ENCODE measurements at regions of chr5 and their contacts with region 1.

Region 1: GRCh38 chr5:56838409-56839039 is 23.2 kb downstream of the MAP3K1 start:
- DNase-seq: no peak
- H3K4me3 Mint-ChIP-seq: peak overlapping the region; percentile 52
- H3K27ac Mint-ChIP-seq: peak overlapping the region; percentile 70
- H3K4me1 Mint-ChIP-seq: peaks cover 46% of the 10 kb centered on the region
- H3K27me3 Mint-ChIP-seq: no peaks in the 10 kb centered on the region

Region 2: DNA sequence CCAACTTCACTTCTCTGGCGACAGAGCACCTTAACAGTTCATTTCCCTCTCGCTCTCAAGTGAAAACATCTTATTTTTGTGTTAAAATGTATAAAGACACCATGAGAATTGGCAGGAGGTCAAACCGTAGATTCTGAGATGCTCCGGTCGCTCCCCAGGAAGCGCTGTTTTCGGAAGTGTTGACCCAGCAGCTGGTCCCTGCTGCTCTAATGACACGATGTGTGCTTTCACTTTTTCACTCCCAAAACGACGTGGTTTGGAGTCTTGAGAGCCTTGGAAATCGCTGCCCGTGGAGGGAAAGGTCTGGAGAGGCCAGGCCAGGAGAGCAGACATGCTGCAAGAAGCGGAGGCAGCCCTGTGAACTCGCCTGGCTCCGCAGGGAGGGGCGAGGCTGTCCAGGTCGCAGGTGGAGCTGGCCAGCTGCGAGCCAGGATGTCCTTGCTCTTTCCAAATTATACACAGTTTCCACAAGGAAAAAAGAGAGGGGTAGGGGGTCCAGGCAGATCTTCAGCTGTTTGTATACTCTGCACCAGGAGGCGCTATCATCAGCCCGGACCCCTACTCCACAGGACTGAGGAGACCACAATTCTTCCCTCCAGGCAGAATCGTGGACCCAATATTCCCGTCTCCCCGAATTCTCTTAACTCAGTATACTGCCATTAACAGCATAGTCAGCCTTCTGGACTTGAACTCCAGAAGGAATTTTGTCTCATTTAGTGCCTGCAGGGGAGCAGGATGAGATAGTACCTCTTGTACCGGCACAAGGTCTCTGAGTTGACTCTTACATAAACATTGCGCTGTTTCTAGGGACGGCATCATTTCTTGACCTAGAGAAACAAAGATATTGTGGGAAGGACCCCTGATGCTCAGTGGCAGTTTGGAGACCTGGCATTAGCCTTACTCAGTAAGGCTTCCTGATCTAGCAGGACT is 356.8 kb before region 1 on chr5:
- intact Hi-C with region 1: loop called (anchors 1 kb)
- DNase-seq: peak; percentile 78
- H3K4me3 Mint-ChIP-seq: peak overlapping the region; percentile 86
- H3K27ac Mint-ChIP-seq: peak overlapping the region; percentile 91
- H3K4me1 Mint-ChIP-seq: peaks cover 38% of the 10 kb centered on the region
- H3K27me3 Mint-ChIP-seq: no peaks in the 10 kb centered on the region

Region 3: DNA sequence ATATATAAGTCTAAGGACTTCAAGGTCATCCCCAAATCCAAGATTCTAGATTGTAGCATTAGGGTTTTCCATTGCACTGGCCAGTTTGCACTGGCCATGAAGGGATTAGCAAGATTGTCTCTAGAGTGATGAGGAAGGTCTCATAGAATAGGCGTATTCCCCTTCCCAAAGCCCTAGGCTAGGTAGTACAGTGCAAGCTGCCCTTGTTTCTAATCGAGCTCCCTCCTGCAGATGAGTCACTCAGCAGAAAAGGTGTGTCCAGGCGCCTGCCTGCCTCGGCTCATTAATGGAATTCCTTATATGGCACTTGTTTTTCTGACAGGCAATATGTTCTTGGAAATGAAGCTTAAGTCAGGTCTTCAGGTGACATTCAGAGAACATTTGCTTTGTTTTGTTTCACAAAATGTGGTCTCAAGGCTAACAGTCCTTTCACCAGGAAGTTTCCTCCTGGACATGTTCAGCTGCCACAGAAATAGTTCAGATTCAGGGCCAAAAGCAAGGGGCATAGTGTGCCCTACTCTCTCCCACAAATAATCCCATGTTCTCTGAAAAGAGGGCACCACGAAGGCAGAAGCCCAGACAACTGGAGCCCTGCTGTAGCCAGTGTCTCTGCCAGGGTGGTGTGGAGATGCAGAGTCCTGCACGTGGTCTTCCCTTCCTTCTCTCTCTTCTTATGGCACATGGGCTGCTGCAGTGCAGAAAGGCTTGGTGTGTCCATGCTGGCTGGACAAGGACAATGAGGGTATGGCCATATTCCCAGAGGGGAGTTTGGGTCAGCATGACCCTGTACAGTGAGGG is 304.3 kb before region 1 on chr5:
- intact Hi-C with region 1: no loop called
- DNase-seq: peak; percentile 72
- H3K4me3 Mint-ChIP-seq: no peak overlapping the region
- H3K27ac Mint-ChIP-seq: peak overlapping the region; percentile 34
- H3K4me1 Mint-ChIP-seq: peaks cover 14% of the 10 kb centered on the region
- H3K27me3 Mint-ChIP-seq: no peaks in the 10 kb centered on the region

Region 4: GRCh38 chr5:57316798-57317327 is 478.3 kb after region 1 on chr5:
- intact Hi-C with region 1: no loop called
- DNase-seq: no peak
- H3K4me3 Mint-ChIP-seq: no peak overlapping the region
- H3K27ac Mint-ChIP-seq: peak overlapping the region; percentile 38
- H3K4me1 Mint-ChIP-seq: peaks cover 3% of the 10 kb centered on the region
- H3K27me3 Mint-ChIP-seq: no peaks in the 10 kb centered on the region